ENCODE measurements at regions of chr4 and their contacts with region 1.

Region 1: GRCh38 chr4:109433205-109434006 is at the start of gene SEC24B:
- DNase-seq: peak; percentile 91 to 93
- ATAC-seq: peak; percentile 96 to 98 (median 96)
- H3K4me3 ChIP-seq: peak within 1 kb of the TSS; percentile 63 to 91 (median 85)
- H3K27ac ChIP-seq: peak within 1 kb of the TSS; percentile 89 to 98 (median 95)
- H3K4me1 ChIP-seq: peaks cover 5 to 51% (median 48%) of the 10 kb centered on the region in 9 donors
- H3K27me3 ChIP-seq: no peaks in the 10 kb centered on the region
- CTCF ChIP-seq: peak; percentile 73 to 98 (median 90)
- total RNA-seq, gene SEC24B: 22.4 to 34.1 (median 29.7) TPM

Region 2: GRCh38 chr4:108570993-108571569 is 862.3 kb before region 1 on chr4:
- intact Hi-C with region 1: no loop called
- DNase-seq: no peak
- ATAC-seq: no peak
- H3K4me3 ChIP-seq: no peak overlapping the region
- H3K27ac ChIP-seq: no peak overlapping the region
- H3K4me1 ChIP-seq: peaks cover 0 to 5% (median 0%) of the 10 kb centered on the region in 9 donors
- H3K27me3 ChIP-seq: peaks cover 0 to 11% (median 0%) of the 10 kb centered on the region in 7 donors
- CTCF ChIP-seq: no peak

Region 3: DNA sequence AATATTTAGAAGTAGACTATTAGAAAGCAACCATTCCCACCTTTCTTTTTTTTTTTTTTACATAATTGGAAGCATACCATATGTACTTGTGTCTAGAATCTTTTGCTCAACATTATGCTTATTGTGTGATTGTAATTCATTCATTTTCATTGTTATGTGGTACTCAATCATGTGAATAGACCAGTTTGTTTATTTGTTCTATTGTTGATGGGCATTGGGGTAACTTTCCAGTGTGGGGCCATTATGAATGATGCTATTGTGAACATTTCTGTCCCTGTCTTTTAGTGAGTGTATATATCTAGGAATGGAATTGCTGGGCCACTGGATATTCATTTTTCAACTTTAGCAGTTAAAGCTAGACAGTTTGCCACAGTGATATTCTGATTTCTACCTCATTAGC is 64.1 kb after region 1 on chr4:
- intact Hi-C with region 1: loop called in 5 of 10 experiments (anchors 5 to 10 kb)
- DNase-seq: no peak
- ATAC-seq: no peak
- H3K4me3 ChIP-seq: no peak overlapping the region
- H3K27ac ChIP-seq: no peak overlapping the region
- H3K4me1 ChIP-seq: peaks cover 0 to 8% (median 0%) of the 10 kb centered on the region in 9 donors
- H3K27me3 ChIP-seq: no peaks in the 10 kb centered on the region
- CTCF ChIP-seq: no peak

Region 4: DNA sequence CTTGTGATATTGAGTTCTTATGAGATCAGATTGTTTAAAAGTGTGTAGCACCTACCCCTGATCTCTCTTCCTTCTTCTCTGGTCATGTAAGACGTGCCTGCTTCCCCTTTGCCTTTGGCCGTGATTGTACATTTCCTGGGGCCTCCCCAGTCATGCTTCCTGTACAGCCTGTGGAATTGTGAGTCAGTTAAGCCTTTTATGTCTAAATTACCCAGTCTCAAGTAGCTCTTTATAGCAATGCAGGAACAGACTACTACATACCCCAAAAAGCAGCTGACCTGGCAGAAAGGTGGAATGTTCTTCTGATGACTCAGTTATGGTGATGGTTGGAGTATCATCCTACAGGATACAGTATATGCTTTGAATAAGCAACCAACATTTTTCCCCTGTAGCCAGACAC is 115.2 kb after region 1 on chr4:
- intact Hi-C with region 1: loop called in 3 of 10 experiments (anchors 10 kb)
- DNase-seq: peak in 1 of 2 donors; percentile 22
- ATAC-seq: peak in 7 of 8 donors; percentile 17 to 86 (median 74)
- H3K4me3 ChIP-seq: no peak overlapping the region
- H3K27ac ChIP-seq: peak overlapping the region in 5 of 10 donors; percentile 17 to 58 (median 23)
- H3K4me1 ChIP-seq: peaks cover 0 to 20% (median 0%) of the 10 kb centered on the region in 9 donors
- H3K27me3 ChIP-seq: no peaks in the 10 kb centered on the region
- CTCF ChIP-seq: no peak

Region 5: DNA sequence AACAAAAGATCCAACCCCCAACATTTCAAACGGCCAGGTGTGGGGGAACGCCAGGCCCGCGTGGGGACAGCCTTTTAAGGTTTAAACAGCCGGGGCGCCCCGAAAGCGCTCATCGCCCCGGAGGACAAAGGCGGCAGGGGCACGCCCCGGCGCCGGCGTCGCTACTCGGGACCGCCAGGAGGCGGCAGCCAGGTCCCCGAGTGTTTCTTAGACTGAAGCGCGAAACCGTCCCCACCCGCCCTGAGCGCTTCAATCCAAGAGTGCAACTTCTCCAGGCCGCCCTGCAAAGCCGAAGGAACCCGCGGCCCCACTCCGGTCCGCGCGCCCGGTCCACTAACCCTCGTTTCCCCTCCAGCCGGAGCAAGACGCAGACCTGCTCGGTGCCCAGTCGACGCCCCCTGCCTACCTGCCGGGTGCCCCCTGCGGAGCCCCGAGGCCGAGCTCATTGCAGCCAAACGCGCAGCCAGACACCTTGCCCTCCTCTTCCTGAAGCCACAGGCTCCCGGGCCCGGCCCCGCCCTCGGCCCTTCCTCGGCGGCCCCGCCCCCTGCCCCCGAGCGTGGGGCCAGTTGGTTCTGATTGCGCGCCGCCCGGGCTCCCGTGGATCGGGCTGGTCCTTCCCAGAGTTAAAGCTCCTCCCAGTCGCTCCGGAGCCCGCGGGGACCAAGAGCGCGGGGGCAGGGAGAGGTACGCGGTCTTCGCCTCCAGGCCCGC is 269.7 kb after region 1 on chr4 and contains the start of gene CASP6:
- intact Hi-C with region 1: loop called in 1 of 10 experiments (anchors 5 kb)
- DNase-seq: peak; percentile 85 to 89
- ATAC-seq: peak; percentile 93 to 98 (median 96)
- H3K4me3 ChIP-seq: peak within 1 kb of the TSS; percentile 64 to 96 (median 86)
- H3K27ac ChIP-seq: peak within 1 kb of the TSS; percentile 63 to 87 (median 81)
- H3K4me1 ChIP-seq: peaks cover 2 to 26% (median 15%) of the 10 kb centered on the region in 9 donors
- H3K27me3 ChIP-seq: no peaks in the 10 kb centered on the region
- CTCF ChIP-seq: peak; percentile 59 to 88 (median 78)
- total RNA-seq, gene CASP6: 3.0 to 10.2 (median 6.2) TPM

Region 6: GRCh38 chr4:109815151-109816081 is 382.0 kb after region 1 on chr4 and contains the start of gene GAR1:
- intact Hi-C with region 1: loop called in 8 of 10 experiments (anchors 2 to 10 kb)
- DNase-seq: peak; percentile 84 to 90
- ATAC-seq: peak; percentile 98 to 100 (median 100)
- H3K4me3 ChIP-seq: peak within 1 kb of the TSS; percentile 65 to 94 (median 78)
- H3K27ac ChIP-seq: peak within 1 kb of the TSS in 9 of 10 donors; percentile 69 to 90 (median 85)
- H3K4me1 ChIP-seq: peaks cover 0 to 25% (median 17%) of the 10 kb centered on the region in 9 donors
- H3K27me3 ChIP-seq: no peaks in the 10 kb centered on the region
- CTCF ChIP-seq: peak in 1 of 9 donors; percentile 21
- total RNA-seq, gene GAR1: 6.8 to 12.3 (median 9.2) TPM

Region 7: GRCh38 chr4:109826719-109827118 is 393.3 kb after region 1 on chr4:
- intact Hi-C with region 1: loop called in 3 of 10 experiments (anchors 5 to 10 kb)
- DNase-seq: no peak
- ATAC-seq: no peak
- H3K4me3 ChIP-seq: no peak overlapping the region
- H3K27ac ChIP-seq: no peak overlapping the region
- H3K4me1 ChIP-seq: no peaks in the 10 kb centered on the region
- H3K27me3 ChIP-seq: no peaks in the 10 kb centered on the region
- CTCF ChIP-seq: peak; percentile 25 to 71 (median 58)